Esophagus muscularis mucosa (tissue), 4 donors: ENCODE measurements at regions of chr2 and their contacts with region 1.

Region 1: DNA sequence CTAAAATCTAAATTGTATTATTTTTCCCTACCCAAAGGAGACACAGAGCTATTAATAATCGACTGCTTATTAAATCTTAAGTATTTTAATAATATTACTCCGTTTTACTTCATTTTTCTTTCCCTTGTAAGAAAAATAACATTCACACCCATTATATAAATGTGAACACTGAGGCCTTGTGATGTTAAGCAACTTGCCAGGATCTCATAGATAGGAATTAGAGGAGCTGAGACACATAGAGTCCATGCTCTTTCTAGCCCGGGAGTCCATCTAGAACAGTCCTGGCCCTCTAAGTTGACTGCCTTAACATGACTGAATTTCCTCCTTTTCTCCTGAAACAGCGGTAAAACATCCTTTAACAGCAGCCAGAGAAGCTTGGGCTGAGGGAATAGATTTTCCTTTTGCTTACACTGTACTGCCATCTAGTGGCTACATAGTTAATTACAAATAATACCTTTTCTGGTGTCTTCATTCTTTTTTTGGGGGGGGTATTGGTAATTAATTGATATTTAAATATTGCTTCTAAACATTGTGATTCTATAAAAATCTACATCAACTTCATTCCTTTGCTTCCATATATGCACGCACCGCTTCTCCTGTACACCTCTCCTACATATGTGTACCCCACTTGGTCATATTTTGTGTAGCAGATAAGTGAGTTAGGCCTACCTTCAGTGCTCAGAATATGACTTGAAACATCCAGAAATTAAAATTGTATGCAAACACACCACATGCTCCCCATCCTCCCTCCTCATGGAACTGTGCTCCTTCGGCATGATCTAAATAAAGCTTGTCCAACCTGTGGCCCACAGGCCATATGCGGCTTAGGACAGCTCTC is 125.8 kb upstream of the HNMT start:
- DNase-seq: no peak
- H3K4me3 ChIP-seq: no peak overlapping the region
- H3K27ac ChIP-seq: no peak overlapping the region
- H3K4me1 ChIP-seq: no peaks in the 10 kb centered on the region
- H3K27me3 ChIP-seq: no peaks in the 10 kb centered on the region
- CTCF ChIP-seq: peak; percentile 50 to 64 (median 61)
- EP300 ChIP-seq: no peak
- POLR2A ChIP-seq: no peak

Region 2: GRCh38 chr2:136423516-136423996 is 1414.9 kb before region 1 on chr2:
- intact Hi-C with region 1: loop called (anchors 5 kb)
- DNase-seq: peak; percentile 92
- H3K4me3 ChIP-seq: peak overlapping the region; percentile 45 to 55 (median 46)
- H3K27ac ChIP-seq: no peak overlapping the region
- H3K4me1 ChIP-seq: peaks cover 6 to 8% (median 7%) of the 10 kb centered on the region in 4 donors
- H3K27me3 ChIP-seq: peaks cover 0 to 20% (median 0%) of the 10 kb centered on the region in 4 donors
- CTCF ChIP-seq: peak; percentile 73 to 91 (median 83)
- EP300 ChIP-seq: no peak
- POLR2A ChIP-seq: no peak

Region 3: DNA sequence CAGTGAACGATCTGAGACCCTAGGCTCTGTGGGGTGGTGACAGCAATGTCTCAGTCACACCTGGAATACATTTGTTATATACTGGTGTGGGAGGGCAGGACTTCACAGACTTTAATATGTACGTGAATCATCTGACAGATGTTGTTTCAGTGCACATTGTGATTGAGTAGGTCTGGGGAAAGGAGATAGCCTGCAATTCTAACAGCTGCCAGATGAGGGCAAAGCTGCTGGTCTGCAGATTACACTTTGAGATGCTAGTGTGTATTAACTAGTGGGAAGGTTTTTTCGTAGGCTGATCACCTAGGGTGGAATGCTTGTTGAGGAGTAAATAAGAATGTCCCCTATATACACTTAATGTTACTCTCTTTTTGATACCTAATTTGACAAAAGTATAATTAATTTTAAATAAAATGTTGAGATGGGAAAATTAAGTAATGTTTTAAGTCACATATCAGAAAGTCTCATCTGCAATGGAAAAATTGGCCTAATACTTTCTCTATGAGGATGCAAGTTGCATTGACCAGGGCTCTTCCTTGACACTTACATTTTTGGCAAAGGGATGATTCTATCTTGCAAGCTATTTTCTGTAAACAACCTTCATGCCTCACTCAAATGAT is 371.1 kb before region 1 on chr2:
- intact Hi-C with region 1: loop called (anchors 5 kb)
- DNase-seq: no peak
- H3K4me3 ChIP-seq: no peak overlapping the region
- H3K27ac ChIP-seq: no peak overlapping the region
- H3K4me1 ChIP-seq: no peaks in the 10 kb centered on the region
- H3K27me3 ChIP-seq: no peaks in the 10 kb centered on the region
- CTCF ChIP-seq: peak; percentile 46 to 69 (median 47)
- EP300 ChIP-seq: no peak
- POLR2A ChIP-seq: no peak

Region 4: GRCh38 chr2:137715731-137716191 is 122.7 kb before region 1 on chr2:
- intact Hi-C with region 1: no loop called
- DNase-seq: no peak
- H3K4me3 ChIP-seq: no peak overlapping the region
- H3K27ac ChIP-seq: no peak overlapping the region
- H3K4me1 ChIP-seq: no peaks in the 10 kb centered on the region
- H3K27me3 ChIP-seq: no peaks in the 10 kb centered on the region
- CTCF ChIP-seq: no peak
- EP300 ChIP-seq: no peak
- POLR2A ChIP-seq: no peak